Activated CD4-positive, alpha-beta memory T cell treated with anti-CD3 and anti-CD28 coated beads for 36 hours (primary cell): ENCODE measurements at regions of chr6 and their contacts with region 1.

Region 1: GRCh38 chr6:33711140-33712129 is at the start of gene UQCC2:
- DNase-seq: peak; percentile 98
- H3K4me3 Mint-ChIP-seq: peak within 1 kb of the TSS; percentile 96
- H3K27ac Mint-ChIP-seq: peak within 1 kb of the TSS; percentile 94
- H3K4me1 Mint-ChIP-seq: peaks cover 26% of the 10 kb centered on the region
- H3K27me3 Mint-ChIP-seq: no peaks in the 10 kb centered on the region
- total RNA-seq, gene UQCC2: 157 to 160 TPM

Region 2: GRCh38 chr6:33075568-33076405 is 635.6 kb before region 1 on chr6 and contains the start of gene HLA-DPB1:
- CTCF ChIA-PET with region 1: no interaction called
- POLR2A ChIA-PET with region 1: no interaction called
- intact Hi-C with region 1: no loop called
- DNase-seq: no peak
- H3K4me3 Mint-ChIP-seq: peak within 1 kb of the TSS; percentile 68
- H3K27ac Mint-ChIP-seq: no peak within 1 kb of the TSS
- H3K4me1 Mint-ChIP-seq: peaks cover 33% of the 10 kb centered on the region
- H3K27me3 Mint-ChIP-seq: peaks cover 16% of the 10 kb centered on the region
- total RNA-seq, gene HLA-DPB1: 5.1 to 6.9 TPM

Region 3: DNA sequence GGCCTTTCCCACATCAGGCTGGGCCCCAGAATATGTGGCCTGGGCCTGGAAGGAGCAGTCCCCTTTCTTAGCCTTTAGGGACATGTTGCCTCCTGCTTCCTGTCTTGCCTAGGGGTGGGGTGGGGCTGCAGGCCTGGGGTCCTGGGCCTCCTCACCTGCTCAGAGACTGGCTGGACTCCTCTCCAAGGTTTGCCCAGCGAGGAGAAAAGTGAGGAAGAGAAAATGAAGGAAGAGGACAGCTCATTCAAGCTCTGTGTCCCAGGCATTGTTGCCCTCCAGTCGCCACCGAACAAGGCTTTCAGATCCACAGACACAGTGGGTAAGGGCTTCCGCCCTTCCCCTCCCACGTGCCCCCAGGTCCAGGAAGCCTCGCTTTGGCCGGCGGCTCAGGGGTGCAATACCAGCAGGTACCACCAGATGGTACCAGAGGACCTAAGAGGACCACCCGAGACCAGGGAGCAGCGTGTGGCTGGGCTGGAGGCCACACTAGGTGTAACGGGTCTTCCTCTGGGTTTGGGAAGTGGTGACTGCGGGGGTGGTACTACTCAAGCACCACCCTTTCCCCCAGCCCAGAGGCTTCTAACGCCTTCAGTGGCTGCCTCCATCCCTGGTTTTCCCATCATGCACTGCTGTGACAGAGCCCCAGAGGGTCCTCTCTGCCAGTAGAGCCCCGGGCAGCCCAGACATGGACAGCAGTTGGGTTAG is 125.9 kb before region 1 on chr6:
- CTCF ChIA-PET with region 1: interaction called, 15 read pairs
- POLR2A ChIA-PET with region 1: interaction called, 4 read pairs
- intact Hi-C with region 1: no loop called
- DNase-seq: peak; percentile 94
- H3K4me3 Mint-ChIP-seq: peak overlapping the region; percentile 71
- H3K27ac Mint-ChIP-seq: peak overlapping the region; percentile 89
- H3K4me1 Mint-ChIP-seq: peaks cover 24% of the 10 kb centered on the region
- H3K27me3 Mint-ChIP-seq: no peaks in the 10 kb centered on the region

Region 4: DNA sequence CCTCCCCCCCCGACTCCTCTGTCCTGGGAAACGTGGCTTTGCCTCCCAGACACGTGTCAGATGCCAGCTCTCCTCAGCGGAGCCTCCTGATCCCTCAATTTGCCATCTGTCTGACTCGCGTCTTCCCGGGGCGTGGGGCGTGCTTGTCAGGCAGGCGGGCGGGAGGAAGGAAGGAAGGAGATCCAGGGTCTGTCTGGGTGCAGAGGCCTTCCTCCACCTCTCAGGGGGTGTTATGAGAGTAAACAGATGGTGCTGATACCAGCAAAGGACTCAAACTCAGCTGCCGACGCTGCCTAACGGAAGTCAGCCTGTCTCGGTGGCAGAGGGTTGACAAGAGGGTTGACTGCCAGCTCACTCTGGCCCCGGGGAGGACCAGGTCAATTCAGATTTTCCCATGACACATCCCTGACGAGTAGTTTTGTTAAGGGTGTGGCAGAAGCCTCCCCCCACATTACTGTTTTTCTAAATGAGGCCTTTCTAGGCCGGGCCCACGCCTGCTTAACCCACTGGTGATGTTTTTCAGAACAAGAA is 17.0 kb before region 1 on chr6:
- CTCF ChIA-PET with region 1: interaction called, 15 read pairs
- POLR2A ChIA-PET with region 1: interaction called, 16 read pairs
- intact Hi-C with region 1: no loop called
- DNase-seq: peak; percentile 88
- H3K4me3 Mint-ChIP-seq: peak overlapping the region; percentile 32
- H3K27ac Mint-ChIP-seq: peak overlapping the region; percentile 97
- H3K4me1 Mint-ChIP-seq: peaks cover 74% of the 10 kb centered on the region
- H3K27me3 Mint-ChIP-seq: no peaks in the 10 kb centered on the region

Region 5: GRCh38 chr6:33744001-33744848 is 32.8 kb after region 1 on chr6:
- CTCF ChIA-PET with region 1: interaction called, 19 read pairs
- POLR2A ChIA-PET with region 1: no interaction called
- intact Hi-C with region 1: no loop called
- DNase-seq: peak; percentile 82
- H3K4me3 Mint-ChIP-seq: no peak overlapping the region
- H3K27ac Mint-ChIP-seq: no peak overlapping the region
- H3K4me1 Mint-ChIP-seq: peaks cover 2% of the 10 kb centered on the region
- H3K27me3 Mint-ChIP-seq: peaks cover 7% of the 10 kb centered on the region

Region 6: GRCh38 chr6:33788694-33789549 is 77.5 kb after region 1 on chr6 and contains the start of gene LEMD2:
- CTCF ChIA-PET with region 1: interaction called, 3 read pairs
- POLR2A ChIA-PET with region 1: interaction called, 6 read pairs
- intact Hi-C with region 1: loop called (anchors 2 kb)
- DNase-seq: peak; percentile 95
- H3K4me3 Mint-ChIP-seq: peak within 1 kb of the TSS; percentile 96
- H3K27ac Mint-ChIP-seq: peak within 1 kb of the TSS; percentile 97
- H3K4me1 Mint-ChIP-seq: peaks cover 42% of the 10 kb centered on the region
- H3K27me3 Mint-ChIP-seq: no peaks in the 10 kb centered on the region
- total RNA-seq, gene LEMD2: 51.4 to 54.8 TPM

Region 7: GRCh38 chr6:33914645-33915044 is 203.2 kb after region 1 on chr6:
- CTCF ChIA-PET with region 1: no interaction called
- POLR2A ChIA-PET with region 1: no interaction called
- intact Hi-C with region 1: no loop called
- DNase-seq: peak; percentile 65
- H3K4me3 Mint-ChIP-seq: no peak overlapping the region
- H3K27ac Mint-ChIP-seq: peak overlapping the region; percentile 35
- H3K4me1 Mint-ChIP-seq: peaks cover 24% of the 10 kb centered on the region
- H3K27me3 Mint-ChIP-seq: no peaks in the 10 kb centered on the region

Region 8: GRCh38 chr6:34610819-34611477 is 899.5 kb after region 1 on chr6:
- CTCF ChIA-PET with region 1: no interaction called
- POLR2A ChIA-PET with region 1: no interaction called
- intact Hi-C with region 1: no loop called
- DNase-seq: no peak
- H3K4me3 Mint-ChIP-seq: no peak overlapping the region
- H3K27ac Mint-ChIP-seq: no peak overlapping the region
- H3K4me1 Mint-ChIP-seq: peaks cover 15% of the 10 kb centered on the region
- H3K27me3 Mint-ChIP-seq: no peaks in the 10 kb centered on the region

Region 9: DNA sequence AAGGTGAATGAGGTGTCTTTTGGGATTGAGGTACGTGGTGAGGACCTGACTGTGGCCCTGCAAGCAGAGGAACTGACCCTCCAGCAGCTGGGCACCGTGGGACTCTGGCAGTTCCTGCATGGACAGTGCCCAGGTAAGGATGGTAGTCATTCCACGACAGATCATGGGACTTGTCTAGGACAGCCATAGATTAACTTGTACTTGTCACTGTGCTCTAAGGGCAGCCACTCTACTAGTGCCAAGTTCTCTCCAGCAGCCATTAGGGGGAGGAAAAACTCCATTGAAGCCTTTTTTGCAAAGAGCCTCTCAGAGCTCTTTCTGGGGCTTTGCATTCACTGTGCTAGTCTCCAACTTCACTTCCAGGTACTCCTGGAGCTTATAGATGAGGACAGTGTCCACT is 1156.0 kb after region 1 on chr6:
- CTCF ChIA-PET with region 1: no interaction called
- POLR2A ChIA-PET with region 1: no interaction called
- intact Hi-C with region 1: no loop called
- DNase-seq: no peak
- H3K4me3 Mint-ChIP-seq: no peak overlapping the region
- H3K27ac Mint-ChIP-seq: peak overlapping the region; percentile 2
- H3K4me1 Mint-ChIP-seq: no peaks in the 10 kb centered on the region
- H3K27me3 Mint-ChIP-seq: no peaks in the 10 kb centered on the region